A673 (cell line): ENCODE measurements at regions of chr17 and their contacts with region 1.

Region 1: GRCh38 chr17:75816674-75817073 is 27.5 kb downstream of the UNC13D start:
- DNase-seq: no peak
- H3K4me3 ChIP-seq: no peak overlapping the region
- H3K27ac ChIP-seq: no peak overlapping the region
- H3K4me1 ChIP-seq: no peaks in the 10 kb centered on the region
- H3K27me3 ChIP-seq: no peaks in the 10 kb centered on the region
- CTCF ChIP-seq: no peak

Region 2: DNA sequence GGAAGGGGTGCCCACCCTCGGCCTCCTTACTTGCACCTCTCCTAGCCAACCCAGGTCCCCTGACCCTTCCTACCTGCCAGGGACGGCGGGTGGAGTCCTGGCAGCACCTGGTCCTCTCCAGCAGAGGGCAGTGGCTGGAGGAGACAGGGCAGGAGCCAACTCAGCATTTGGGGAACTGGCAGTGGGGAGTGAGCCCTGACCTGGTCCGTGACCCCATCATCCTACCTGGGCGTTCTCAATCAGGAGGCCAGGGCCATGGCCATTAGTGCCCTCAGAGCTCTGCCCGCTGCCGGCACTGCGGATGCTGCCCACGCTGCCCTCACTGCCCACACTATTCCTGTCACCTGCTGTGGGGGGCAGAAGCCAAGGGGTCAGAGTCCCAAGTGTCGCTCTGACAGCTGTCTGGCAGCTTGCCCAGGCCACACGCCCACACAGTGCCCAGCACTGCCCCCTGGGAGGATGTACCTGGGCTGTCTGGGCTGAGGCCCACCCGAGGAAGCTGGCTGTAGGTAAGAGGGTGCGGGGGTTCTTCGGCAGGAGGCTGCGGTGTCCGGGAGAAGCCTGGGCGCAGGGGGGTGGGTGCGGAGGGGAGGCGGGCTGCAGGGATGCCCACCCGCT is 312.2 kb before region 1 on chr17:
- CTCF ChIA-PET with region 1: no interaction called
- POLR2A ChIA-PET with region 1: no interaction called
- intact Hi-C with region 1: no loop called
- DNase-seq: no peak
- H3K4me3 ChIP-seq: no peak overlapping the region
- H3K27ac ChIP-seq: no peak overlapping the region
- H3K4me1 ChIP-seq: no peaks in the 10 kb centered on the region
- H3K27me3 ChIP-seq: no peaks in the 10 kb centered on the region
- CTCF ChIP-seq: peak; percentile 42; the same call in 1 of the 2 replicates

Region 3: GRCh38 chr17:75679706-75680442 is 136.8 kb before region 1 on chr17:
- CTCF ChIA-PET with region 1: no interaction called
- POLR2A ChIA-PET with region 1: no interaction called
- intact Hi-C with region 1: no loop called
- DNase-seq: no peak
- H3K4me3 ChIP-seq: no peak overlapping the region
- H3K27ac ChIP-seq: no peak overlapping the region
- H3K4me1 ChIP-seq: no peaks in the 10 kb centered on the region
- H3K27me3 ChIP-seq: no peaks in the 10 kb centered on the region
- CTCF ChIP-seq: no peak

Region 4: DNA sequence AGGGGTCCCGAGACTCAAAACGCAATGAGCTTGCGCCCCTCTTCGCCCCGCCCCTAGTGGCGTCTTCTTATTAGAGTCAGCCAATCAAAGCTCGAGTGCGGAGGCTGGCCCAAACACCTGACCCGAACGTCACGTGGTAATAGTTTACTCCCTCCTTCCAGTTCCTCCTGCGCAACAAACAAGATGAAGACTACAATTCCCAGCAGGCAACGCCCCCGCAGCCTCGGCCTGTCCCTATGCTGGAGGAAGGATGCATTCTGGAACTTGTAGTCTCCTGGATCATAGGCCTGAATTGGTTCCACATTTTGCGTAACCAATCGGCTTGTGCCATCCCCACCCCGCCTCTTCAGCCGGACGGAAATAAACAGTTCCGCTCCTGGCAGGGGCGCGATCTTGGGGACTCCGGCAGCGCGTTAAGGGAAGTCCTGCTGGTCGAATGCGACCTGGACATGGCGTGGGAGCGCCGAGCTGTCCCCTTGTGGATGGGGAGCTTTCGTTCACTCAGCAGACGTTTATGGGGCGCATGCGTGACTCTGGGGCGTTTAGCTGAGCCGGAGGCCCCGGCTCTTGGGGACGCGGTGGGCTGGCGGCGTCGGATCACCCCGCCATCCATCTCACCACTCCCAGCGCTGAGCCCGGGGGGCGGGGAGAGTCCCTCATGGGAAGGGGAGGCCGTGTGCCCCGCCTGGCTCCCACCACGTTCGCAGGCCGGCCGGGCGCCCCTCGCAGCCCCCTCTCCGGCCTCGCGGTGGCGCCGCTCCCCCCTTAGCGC is 38.8 kb after region 1 on chr17 and contains the start of gene WBP2:
- CTCF ChIA-PET with region 1: no interaction called
- POLR2A ChIA-PET with region 1: interaction called, 12 read pairs
- intact Hi-C with region 1: no loop called
- DNase-seq: peak; percentile 100
- H3K4me3 ChIP-seq: peak within 1 kb of the TSS; percentile 63
- H3K27ac ChIP-seq: peak within 1 kb of the TSS; percentile 86
- H3K4me1 ChIP-seq: peaks cover 13% of the 10 kb centered on the region
- H3K27me3 ChIP-seq: no peaks in the 10 kb centered on the region
- CTCF ChIP-seq: peak; percentile 54; the same call in 1 of the 2 replicates
- total RNA-seq, gene WBP2: 70.3 and 87.5 TPM in 2 replicates